Left ventricle myocardium superior (tissue), 1 donor: ENCODE measurements at regions of chr10 and their contacts with region 1.

Region 1: GRCh38 chr10:125060826-125061556 is 99.4 kb downstream of the CTBP2 start:
- DNase-seq: peak; percentile 90
- ATAC-seq: peak; percentile 68

Region 2: DNA sequence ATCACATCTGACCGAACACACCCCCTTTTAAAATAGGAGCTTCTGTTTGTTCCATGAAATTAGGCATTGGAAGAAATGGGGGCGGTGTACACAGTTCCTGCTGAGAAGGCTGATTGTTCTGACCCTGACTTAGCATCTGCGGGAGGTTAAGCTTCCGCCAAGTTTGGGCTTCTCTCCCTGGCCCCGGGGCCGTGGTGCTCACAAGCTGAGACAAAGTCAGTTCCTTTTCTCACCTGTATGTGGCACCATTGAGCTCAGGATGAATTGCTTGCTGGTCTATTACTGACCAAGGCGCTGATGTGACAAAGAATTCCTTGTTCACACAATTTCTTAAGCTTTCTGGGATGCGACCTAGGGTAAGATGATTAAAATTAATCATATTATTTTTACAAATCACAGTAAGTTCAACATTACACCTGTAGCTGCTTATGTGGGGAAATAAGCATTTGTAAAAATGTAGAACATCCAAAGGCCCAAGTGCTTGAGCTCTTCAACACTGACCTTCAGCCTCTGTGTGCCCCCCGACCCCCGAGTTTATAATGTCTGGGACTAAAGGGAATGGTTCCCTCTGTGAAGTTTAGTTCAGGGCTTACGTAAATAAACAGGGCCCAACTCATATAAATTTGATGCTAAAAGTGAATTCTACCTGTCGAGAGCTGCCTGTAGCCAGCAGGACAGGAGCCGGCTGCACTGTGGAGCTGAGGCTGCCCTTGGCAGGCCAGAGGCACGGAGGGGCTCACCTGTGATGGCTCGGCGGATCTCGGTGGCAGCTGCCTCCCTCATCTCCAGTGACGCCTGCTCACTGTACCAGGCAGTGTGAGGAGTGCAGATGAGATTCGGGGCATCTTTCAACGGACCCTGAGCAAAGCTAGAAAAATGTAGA is 68.3 kb before region 1 on chr10:
- intact Hi-C with region 1: loop called (anchors 10 kb)
- DNase-seq: peak; percentile 76
- ATAC-seq: peak; percentile 66

Region 3: GRCh38 chr10:125209591-125210355 is 148.8 kb after region 1 on chr10:
- intact Hi-C with region 1: no loop called
- DNase-seq: no peak
- ATAC-seq: no peak